Heart left ventricle (tissue), 16 donors: ENCODE measurements at regions of chr6 and their contacts with region 1.

Region 1: DNA sequence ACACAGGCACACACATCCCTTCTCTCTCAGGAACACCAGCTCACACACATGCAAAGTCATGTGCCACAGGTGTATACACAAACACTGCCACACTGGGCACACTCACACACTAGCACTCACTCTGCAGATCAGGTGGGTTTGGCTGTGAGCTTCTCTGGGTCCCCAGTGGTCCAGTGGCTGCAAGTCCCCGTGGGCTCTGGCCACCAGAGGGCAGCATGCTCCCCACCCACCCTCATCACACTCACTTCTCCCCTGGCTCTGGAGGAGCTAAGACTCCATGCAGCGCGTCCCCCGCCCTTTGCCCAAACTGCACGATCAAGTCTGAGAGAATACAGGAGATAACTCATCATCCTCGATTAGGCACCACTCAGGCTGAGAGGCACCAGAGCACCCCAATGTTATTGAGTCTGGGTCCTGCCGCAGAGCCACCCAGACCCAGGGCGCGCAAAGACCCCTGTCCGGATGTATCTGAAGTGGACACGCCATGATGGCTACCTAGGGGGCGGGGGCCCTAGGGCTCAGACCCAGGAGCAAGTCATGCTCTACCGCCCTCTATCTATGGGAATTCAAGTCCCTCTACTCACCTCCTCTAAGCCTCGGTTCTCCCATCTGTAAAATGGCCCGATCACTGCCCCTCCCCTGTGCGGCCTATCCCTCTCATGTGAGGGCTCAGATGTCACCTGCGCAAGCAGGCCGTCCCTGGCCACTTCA is 90.5 kb downstream of the GRM4 start:
- DNase-seq: peak; percentile 31 to 78 (median 47)
- ATAC-seq: peak in 3 of 4 donors; percentile 40 to 68 (median 65)
- H3K4me3 ChIP-seq: no peak overlapping the region
- H3K27ac ChIP-seq: no peak overlapping the region
- H3K4me1 ChIP-seq: peaks cover 0 to 5% (median 0%) of the 10 kb centered on the region in 12 donors
- H3K27me3 ChIP-seq: peaks cover 3 to 55% (median 6%) of the 10 kb centered on the region in 9 donors
- CTCF ChIP-seq: peak; percentile 62 to 84 (median 72)
- POLR2A ChIP-seq: no peak

Region 2: DNA sequence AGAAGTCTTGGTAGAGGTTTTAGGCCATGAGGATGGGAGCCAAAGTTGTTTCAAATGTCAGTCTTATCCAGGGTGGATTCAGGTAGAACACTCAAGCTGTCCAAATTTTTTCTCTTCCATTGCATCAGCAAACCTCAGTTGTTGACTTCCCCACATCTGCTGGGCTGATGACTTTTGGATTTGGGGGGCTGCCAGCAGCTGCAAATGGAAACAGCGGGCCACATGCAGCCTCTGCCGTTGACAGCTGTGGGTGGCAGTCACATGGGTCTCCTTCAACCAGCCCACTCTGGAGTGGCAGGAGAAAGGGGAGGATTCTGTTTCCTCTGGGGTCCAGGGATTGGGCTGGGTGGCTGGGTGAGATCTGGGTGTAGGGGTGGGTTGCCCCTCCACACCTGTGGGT is 245.8 kb before region 1 on chr6:
- intact Hi-C with region 1: no loop called
- DNase-seq: peak in 1 of 5 donors; percentile 25
- ATAC-seq: no peak
- H3K4me3 ChIP-seq: no peak overlapping the region
- H3K27ac ChIP-seq: no peak overlapping the region
- H3K4me1 ChIP-seq: peaks cover 0 to 18% (median 13%) of the 10 kb centered on the region in 12 donors
- H3K27me3 ChIP-seq: peaks cover 2 to 38% (median 20%) of the 10 kb centered on the region in 9 donors
- CTCF ChIP-seq: no peak
- POLR2A ChIP-seq: no peak

Region 3: GRCh38 chr6:34145161-34146020 is 90.0 kb after region 1 on chr6:
- intact Hi-C with region 1: loop called in 4 of 10 experiments (anchors 2 to 5 kb)
- DNase-seq: peak in 2 of 5 donors; percentile 24 to 64
- ATAC-seq: peak in 3 of 4 donors; percentile 38 to 51 (median 44)
- H3K4me3 ChIP-seq: peak overlapping the region; percentile 16 to 52 (median 40)
- H3K27ac ChIP-seq: no peak overlapping the region
- H3K4me1 ChIP-seq: peaks cover 2 to 37% (median 16%) of the 10 kb centered on the region in 12 donors
- H3K27me3 ChIP-seq: peaks cover 41 to 84% (median 55%) of the 10 kb centered on the region in 9 donors
- CTCF ChIP-seq: no peak
- POLR2A ChIP-seq: no peak

Region 4: GRCh38 chr6:34154668-34155447 is 99.5 kb after region 1 on chr6:
- intact Hi-C with region 1: loop called in 8 of 10 experiments (anchors 1 to 5 kb)
- DNase-seq: peak in 4 of 5 donors; percentile 31 to 79 (median 48)
- ATAC-seq: peak; percentile 22 to 86 (median 75)
- H3K4me3 ChIP-seq: peak overlapping the region in 6 of 12 donors; percentile 5 to 30 (median 20)
- H3K27ac ChIP-seq: no peak overlapping the region
- H3K4me1 ChIP-seq: peaks cover 0 to 11% (median 5%) of the 10 kb centered on the region in 12 donors
- H3K27me3 ChIP-seq: peaks cover 12 to 62% (median 55%) of the 10 kb centered on the region in 9 donors
- CTCF ChIP-seq: peak; percentile 92 to 98 (median 96)
- POLR2A ChIP-seq: no peak